ENCODE measurements at regions of chr2 and their contacts with region 1.

Region 1: GRCh38 chr2:190880378-190881073 is at the start of gene GLS:
- DNase-seq: peak; percentile 97
- ATAC-seq: peak; percentile 91 to 93
- H3K4me3 ChIP-seq: peak within 1 kb of the TSS; percentile 69 to 96 (median 87)
- H3K27ac ChIP-seq: peak within 1 kb of the TSS; percentile 92 to 94 (median 93)
- H3K4me1 ChIP-seq: peaks cover 30 to 31% of the 10 kb centered on the region in 2 donors
- H3K27me3 ChIP-seq: no peaks in the 10 kb centered on the region
- CTCF ChIP-seq: no peak
- POLR2A ChIP-seq: peak; percentile 97 to 98
- total RNA-seq, gene GLS: 12.4 to 32.6 (median 21.8) TPM

Region 2: GRCh38 chr2:189762551-189763298 is 1117.8 kb before region 1 on chr2 and contains the start of gene OSGEPL1:
- in situ Hi-C with region 1: no loop called
- intact Hi-C with region 1: loop called (anchors 5 kb)
- DNase-seq: peak; percentile 87 to 89
- ATAC-seq: peak; percentile 98
- H3K4me3 ChIP-seq: peak within 1 kb of the TSS; percentile 59 to 89 (median 66)
- H3K27ac ChIP-seq: peak within 1 kb of the TSS; percentile 81 to 89 (median 86)
- H3K4me1 ChIP-seq: peaks cover 16 to 23% of the 10 kb centered on the region in 2 donors
- H3K27me3 ChIP-seq: no peaks in the 10 kb centered on the region
- CTCF ChIP-seq: peak in 4 of 5 experiments; percentile 13 to 52 (median 32)
- POLR2A ChIP-seq: peak in 1 of 2 donors; percentile 8
- total RNA-seq, gene OSGEPL1: 2.1 to 15.6 (median 6.5) TPM

Region 3: DNA sequence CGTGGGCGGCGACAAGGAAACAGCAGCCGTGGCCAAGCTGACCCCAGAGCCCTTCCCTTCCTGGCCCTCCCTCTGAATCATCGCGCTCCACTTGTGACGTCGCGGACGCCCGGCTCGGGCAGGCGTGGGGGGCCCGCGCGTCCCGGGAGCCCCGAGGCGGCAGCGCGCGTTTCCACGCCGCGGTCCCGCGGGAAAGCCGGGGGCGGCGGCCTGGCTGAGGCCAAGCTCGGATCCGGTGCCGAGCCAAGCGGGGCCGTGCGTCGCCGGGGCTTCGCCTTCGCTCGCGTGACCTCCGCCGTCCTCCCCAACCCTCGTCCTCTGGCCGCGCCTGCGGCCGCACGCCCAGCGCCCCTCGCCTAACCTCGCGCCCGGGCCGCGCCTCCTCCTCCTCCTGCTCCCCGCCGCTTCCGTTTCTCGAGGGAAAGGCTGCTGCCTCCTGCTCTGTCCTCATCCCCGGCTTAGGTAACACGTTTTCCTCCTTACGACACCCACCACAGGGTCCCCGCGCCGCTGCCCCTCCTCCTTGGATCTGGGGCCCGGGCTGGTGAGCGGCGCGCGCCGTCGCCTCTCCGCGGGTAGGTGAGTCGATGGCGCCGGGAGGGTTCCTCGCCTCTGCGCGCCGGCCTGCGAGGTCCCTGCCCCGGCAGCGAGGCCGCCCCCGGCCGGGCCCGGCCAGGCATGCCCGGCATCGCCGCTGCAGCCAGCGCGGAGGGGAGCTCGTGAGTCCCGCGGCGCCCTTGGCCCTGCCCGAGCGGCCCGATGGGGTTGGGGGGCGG is 536.8 kb before region 1 on chr2 and contains the start of gene INPP1:
- in situ Hi-C with region 1: no loop called
- intact Hi-C with region 1: loop called (anchors 10 kb)
- DNase-seq: peak; percentile 33 to 54
- ATAC-seq: peak; percentile 66 to 72
- H3K4me3 ChIP-seq: peak within 1 kb of the TSS; percentile 58 to 82 (median 72)
- H3K27ac ChIP-seq: peak within 1 kb of the TSS; percentile 77 to 90 (median 89)
- H3K4me1 ChIP-seq: peaks cover 13 to 24% of the 10 kb centered on the region in 2 donors
- H3K27me3 ChIP-seq: no peaks in the 10 kb centered on the region
- CTCF ChIP-seq: no peak
- POLR2A ChIP-seq: peak; percentile 65 to 74
- total RNA-seq, gene INPP1: 5.6 to 9.9 (median 8.0) TPM

Region 4: DNA sequence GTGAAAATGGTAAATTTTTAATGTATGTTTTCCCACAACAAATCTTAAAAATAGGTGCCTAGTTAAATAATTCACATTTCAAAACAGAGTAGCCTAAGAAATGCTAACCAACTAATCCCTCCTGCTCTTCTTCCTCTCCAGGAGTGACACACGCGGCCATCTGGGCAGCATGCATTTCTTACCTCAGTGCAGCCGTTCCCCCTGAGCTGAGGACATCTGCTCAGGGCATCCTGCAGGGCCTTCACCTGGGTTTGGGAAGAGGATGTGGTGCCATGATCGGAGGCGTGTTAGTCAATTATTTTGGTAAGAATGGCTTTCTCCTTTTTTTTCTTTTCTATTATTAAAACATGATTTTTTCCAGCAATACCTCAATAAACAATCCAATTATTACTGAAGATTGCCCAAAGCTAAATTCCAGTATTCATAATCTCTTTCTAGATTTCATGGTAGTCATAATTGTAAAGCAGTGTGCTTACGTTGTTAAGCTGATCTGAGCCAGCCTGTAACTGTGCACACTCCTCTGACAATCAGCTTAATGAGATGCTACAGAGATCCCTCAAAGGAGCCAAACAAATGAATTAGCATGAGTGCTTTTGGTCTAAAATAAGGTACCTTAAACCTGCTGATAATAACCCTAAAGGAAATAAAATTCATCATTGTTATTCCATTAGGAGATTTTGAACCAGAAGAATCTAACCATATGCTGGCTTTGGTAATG is 391.9 kb before region 1 on chr2:
- in situ Hi-C with region 1: no loop called
- intact Hi-C with region 1: no loop called
- DNase-seq: no peak
- ATAC-seq: no peak
- H3K4me3 ChIP-seq: no peak overlapping the region
- H3K27ac ChIP-seq: no peak overlapping the region
- H3K4me1 ChIP-seq: no peaks in the 10 kb centered on the region
- H3K27me3 ChIP-seq: no peaks in the 10 kb centered on the region
- CTCF ChIP-seq: no peak
- POLR2A ChIP-seq: no peak

Region 5: DNA sequence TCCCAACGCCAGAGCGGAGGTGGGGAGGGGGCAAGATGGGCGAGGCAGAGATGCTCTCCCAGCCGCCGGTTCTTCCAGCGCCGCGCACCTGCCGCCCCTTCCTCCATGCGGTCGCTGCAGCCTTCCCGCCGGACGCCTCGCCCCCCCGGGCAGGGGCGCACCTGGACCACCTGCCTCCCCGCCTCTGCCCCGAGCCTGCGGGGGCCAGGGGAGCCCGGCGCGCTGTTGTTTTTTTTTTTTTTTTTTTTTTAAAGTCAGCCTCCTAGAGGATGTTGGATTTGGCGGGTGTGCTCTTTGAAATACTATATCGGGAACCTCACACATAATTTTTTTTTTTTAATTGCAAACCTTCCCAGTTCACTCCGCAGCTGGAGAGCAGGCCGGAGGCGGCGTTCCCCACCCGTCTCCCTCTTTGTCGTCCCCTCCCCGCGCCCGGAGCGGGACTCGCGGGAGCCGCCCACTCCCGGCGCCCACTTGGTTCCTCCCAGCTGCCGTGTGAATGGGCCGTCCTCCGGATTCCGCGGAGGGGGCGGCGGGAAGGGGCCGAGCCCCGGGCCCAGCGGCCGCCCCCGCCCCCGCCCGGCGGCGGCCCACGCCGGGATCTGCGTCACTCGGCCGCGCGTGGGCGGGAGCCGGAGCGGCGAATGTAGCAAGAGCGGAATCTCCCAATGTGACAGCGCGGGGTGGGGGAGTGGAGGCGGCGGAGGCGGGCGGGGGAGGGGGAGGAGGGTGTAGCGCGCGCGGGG is 232.1 kb before region 1 on chr2:
- in situ Hi-C with region 1: no loop called
- intact Hi-C with region 1: loop called (anchors 2 kb)
- DNase-seq: peak; percentile 70 to 76
- ATAC-seq: peak; percentile 78 to 80
- H3K4me3 ChIP-seq: peak overlapping the region; percentile 69 to 87 (median 82)
- H3K27ac ChIP-seq: peak overlapping the region; percentile 73 to 87 (median 82)
- H3K4me1 ChIP-seq: peaks cover 20 to 28% of the 10 kb centered on the region in 2 donors
- H3K27me3 ChIP-seq: no peaks in the 10 kb centered on the region
- CTCF ChIP-seq: no peak
- POLR2A ChIP-seq: peak; percentile 58 to 66

Region 6: GRCh38 chr2:191013932-191014652 is 133.6 kb after region 1 on chr2 and contains the start of gene STAT1:
- in situ Hi-C with region 1: loop called in 1 of 4 experiments (anchors 25 kb)
- intact Hi-C with region 1: no loop called
- DNase-seq: peak; percentile 83 to 88
- ATAC-seq: peak; percentile 92 to 96
- H3K4me3 ChIP-seq: peak within 1 kb of the TSS; percentile 82 to 98 (median 90)
- H3K27ac ChIP-seq: peak within 1 kb of the TSS; percentile 89 to 98 (median 95)
- H3K4me1 ChIP-seq: peaks cover 13 to 25% of the 10 kb centered on the region in 2 donors
- H3K27me3 ChIP-seq: no peaks in the 10 kb centered on the region
- CTCF ChIP-seq: peak in 4 of 5 experiments; percentile 18 to 28 (median 20)
- POLR2A ChIP-seq: peak; percentile 89 to 90
- total RNA-seq, gene STAT1: 23.0 to 36.9 (median 28.6) TPM

Region 7: GRCh38 chr2:191020221-191020741 is 139.8 kb after region 1 on chr2:
- in situ Hi-C with region 1: loop called in 1 of 4 experiments (anchors 25 kb)
- intact Hi-C with region 1: loop called (anchors 2 kb)
- DNase-seq: peak; percentile 86 to 93
- ATAC-seq: peak; percentile 99 to 100
- H3K4me3 ChIP-seq: peak overlapping the region; percentile 71 to 78 (median 75)
- H3K27ac ChIP-seq: peak overlapping the region; percentile 84 to 90 (median 86)
- H3K4me1 ChIP-seq: peaks cover 7 to 13% of the 10 kb centered on the region in 2 donors
- H3K27me3 ChIP-seq: no peaks in the 10 kb centered on the region
- CTCF ChIP-seq: peak in 4 of 5 experiments; percentile 14 to 51 (median 36)
- POLR2A ChIP-seq: peak; percentile 74 to 84

Region 8: GRCh38 chr2:191677646-191678436 is 797.3 kb after region 1 on chr2 and contains the start of gene NABP1:
- in situ Hi-C with region 1: no loop called
- intact Hi-C with region 1: loop called (anchors 5 kb)
- DNase-seq: peak; percentile 97 to 98
- ATAC-seq: peak; percentile 88 to 89
- H3K4me3 ChIP-seq: peak within 1 kb of the TSS; percentile 68 to 90 (median 84)
- H3K27ac ChIP-seq: peak within 1 kb of the TSS; percentile 86 to 97 (median 92)
- H3K4me1 ChIP-seq: peaks cover 3 to 25% of the 10 kb centered on the region in 2 donors
- H3K27me3 ChIP-seq: no peaks in the 10 kb centered on the region
- CTCF ChIP-seq: no peak
- POLR2A ChIP-seq: peak; percentile 98 to 99
- total RNA-seq, gene NABP1: 0.63 to 5.5 (median 4.0) TPM